Activated CD4-positive, alpha-beta T cell treated with anti-CD3 and anti-CD28 coated beads for 36 hours (primary cell): ENCODE measurements at regions of chr11 and their contacts with region 1.

Region 1: DNA sequence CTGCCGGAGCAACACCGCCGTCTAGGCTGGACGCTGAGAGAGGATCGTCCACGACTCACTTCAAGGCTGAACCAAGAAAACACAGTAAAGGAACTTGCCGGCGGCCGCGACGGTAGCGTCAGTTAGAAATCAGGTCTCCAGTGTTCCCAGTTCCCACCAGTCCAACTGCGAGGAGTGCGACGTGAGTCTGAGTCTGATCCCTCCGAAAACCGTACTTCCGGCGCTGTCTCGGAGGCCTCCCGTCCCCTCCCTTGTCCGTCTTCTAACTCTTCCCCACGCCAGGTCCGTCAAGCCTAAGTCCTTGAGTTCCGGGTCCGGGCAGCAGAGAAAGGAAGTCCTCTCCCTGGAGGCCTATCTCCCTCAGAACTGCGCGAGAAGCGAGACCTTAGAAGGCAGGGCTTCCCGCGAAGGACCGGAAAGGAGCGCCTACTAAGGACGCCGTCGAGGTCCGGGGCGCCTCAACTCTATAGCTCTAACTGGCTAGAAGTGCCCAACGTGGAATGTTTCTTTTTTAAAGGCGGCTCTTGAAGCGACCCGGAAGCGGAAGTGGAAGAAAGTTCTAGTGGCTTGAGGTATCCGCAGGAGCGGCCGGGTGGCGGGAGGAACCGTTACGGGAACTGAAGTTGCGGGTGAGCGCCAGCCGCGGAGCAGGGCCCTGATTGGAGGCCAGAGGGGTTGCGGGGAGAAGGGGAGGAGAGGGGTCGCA is at the starts of genes BANF1 and EIF1AD:
- DNase-seq: peak; percentile 95
- ATAC-seq: peak; percentile 88
- H3K4me3 Mint-ChIP-seq: peak within 1 kb of the TSS; percentile 100
- H3K27ac Mint-ChIP-seq: peak within 1 kb of the TSS; percentile 98
- H3K4me1 Mint-ChIP-seq: peaks cover 36% of the 10 kb centered on the region
- H3K27me3 Mint-ChIP-seq: no peaks in the 10 kb centered on the region
- total RNA-seq, gene BANF1: 233 to 293 TPM
- total RNA-seq, gene EIF1AD: 45.1 to 52.2 TPM

Region 2: DNA sequence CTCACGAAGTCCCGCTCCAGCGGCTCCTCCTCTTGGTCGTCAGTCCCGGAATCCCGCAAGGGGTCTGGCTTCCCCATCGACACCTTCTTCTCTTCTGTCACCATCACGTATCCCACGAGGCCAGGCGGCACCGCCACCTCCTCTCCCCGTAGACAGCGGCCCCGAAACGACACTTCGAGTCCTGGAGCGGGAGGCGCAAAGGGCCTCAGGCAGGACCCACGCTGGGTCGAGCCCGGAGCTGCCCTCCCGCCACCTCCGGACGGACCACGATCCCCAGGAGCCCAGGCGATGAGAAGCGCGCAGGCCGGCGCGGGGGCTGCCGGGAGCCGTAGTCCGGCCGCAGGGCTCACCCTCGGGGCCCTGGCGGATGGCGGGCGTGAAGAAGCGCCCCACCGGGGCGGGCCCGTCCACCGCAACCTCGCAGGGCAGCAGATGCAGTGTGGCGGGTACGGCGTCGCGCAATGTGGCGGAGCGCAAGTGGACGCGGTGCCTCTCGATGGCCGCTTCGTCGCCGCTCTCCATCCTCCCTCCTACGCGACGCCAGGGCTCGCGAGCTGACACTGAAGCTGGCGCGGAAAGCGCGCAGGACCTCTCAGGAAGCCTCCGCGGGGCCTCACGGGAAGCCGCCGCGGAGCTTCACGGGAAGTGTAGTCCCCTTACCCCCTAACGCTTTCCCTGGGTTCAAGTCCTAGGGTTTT is 281.7 kb before region 1 on chr11 and contains the start of gene RNASEH2C:
- CTCF ChIA-PET with region 1: interaction called, 3 read pairs
- POLR2A ChIA-PET with region 1: no interaction called
- intact Hi-C with region 1: loop called in 1 of 2 experiments (anchors 1 kb)
- DNase-seq: peak; percentile 92
- ATAC-seq: peak; percentile 94
- H3K4me3 Mint-ChIP-seq: peak within 1 kb of the TSS; percentile 84
- H3K27ac Mint-ChIP-seq: peak within 1 kb of the TSS; percentile 88
- H3K4me1 Mint-ChIP-seq: peaks cover 23% of the 10 kb centered on the region
- H3K27me3 Mint-ChIP-seq: no peaks in the 10 kb centered on the region
- total RNA-seq, gene RNASEH2C: 72.5 to 96.8 TPM

Region 3: GRCh38 chr11:65888163-65888814 is 113.8 kb before region 1 on chr11 and contains the start of gene FIBP:
- CTCF ChIA-PET with region 1: interaction called, 7 read pairs
- POLR2A ChIA-PET with region 1: interaction called, 4 read pairs
- intact Hi-C with region 1: loop called in 1 of 2 experiments (anchors 1 kb)
- DNase-seq: peak; percentile 99
- ATAC-seq: peak; percentile 68
- H3K4me3 Mint-ChIP-seq: peak within 1 kb of the TSS; percentile 94
- H3K27ac Mint-ChIP-seq: peak within 1 kb of the TSS; percentile 95
- H3K4me1 Mint-ChIP-seq: peaks cover 57% of the 10 kb centered on the region
- H3K27me3 Mint-ChIP-seq: no peaks in the 10 kb centered on the region
- total RNA-seq, gene FIBP: 95.4 to 121 TPM

Region 4: GRCh38 chr11:66022401-66023185 is 20.5 kb after region 1 on chr11:
- CTCF ChIA-PET with region 1: interaction called, 9 read pairs
- POLR2A ChIA-PET with region 1: interaction called, 3 read pairs
- intact Hi-C with region 1: loop called in 1 of 2 experiments (anchors 2 kb)
- DNase-seq: peak; percentile 89
- ATAC-seq: peak; percentile 94
- H3K4me3 Mint-ChIP-seq: no peak overlapping the region
- H3K27ac Mint-ChIP-seq: no peak overlapping the region
- H3K4me1 Mint-ChIP-seq: peaks cover 8% of the 10 kb centered on the region
- H3K27me3 Mint-ChIP-seq: peaks cover 7% of the 10 kb centered on the region

Region 5: DNA sequence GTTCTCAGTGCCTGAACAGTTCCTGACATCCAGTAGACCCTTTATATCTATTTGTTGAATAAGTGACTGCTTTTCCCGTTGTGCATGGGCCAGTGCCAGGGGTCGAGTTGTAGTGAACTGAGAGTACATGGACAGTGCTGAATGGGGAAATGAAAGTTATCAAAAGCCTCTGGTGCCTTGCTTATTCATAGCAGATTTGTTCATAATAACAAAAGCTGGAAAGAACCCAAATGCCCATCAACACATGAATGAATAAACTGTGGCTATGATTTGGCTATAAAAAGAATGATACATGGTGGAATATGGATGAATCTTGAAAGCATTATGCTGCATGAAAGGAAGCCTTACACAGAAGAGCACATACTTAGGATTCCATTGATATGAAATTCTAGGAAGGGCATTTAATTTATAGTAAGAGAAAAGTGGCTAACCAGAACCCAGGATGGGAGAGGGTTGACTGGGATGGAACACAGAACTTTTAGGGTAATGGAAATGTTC is 110.6 kb after region 1 on chr11:
- CTCF ChIA-PET with region 1: no interaction called
- POLR2A ChIA-PET with region 1: no interaction called
- intact Hi-C with region 1: no loop called
- DNase-seq: no peak
- ATAC-seq: no peak
- H3K4me3 Mint-ChIP-seq: no peak overlapping the region
- H3K27ac Mint-ChIP-seq: peak overlapping the region; percentile 91
- H3K4me1 Mint-ChIP-seq: peaks cover 96% of the 10 kb centered on the region
- H3K27me3 Mint-ChIP-seq: no peaks in the 10 kb centered on the region

Region 6: DNA sequence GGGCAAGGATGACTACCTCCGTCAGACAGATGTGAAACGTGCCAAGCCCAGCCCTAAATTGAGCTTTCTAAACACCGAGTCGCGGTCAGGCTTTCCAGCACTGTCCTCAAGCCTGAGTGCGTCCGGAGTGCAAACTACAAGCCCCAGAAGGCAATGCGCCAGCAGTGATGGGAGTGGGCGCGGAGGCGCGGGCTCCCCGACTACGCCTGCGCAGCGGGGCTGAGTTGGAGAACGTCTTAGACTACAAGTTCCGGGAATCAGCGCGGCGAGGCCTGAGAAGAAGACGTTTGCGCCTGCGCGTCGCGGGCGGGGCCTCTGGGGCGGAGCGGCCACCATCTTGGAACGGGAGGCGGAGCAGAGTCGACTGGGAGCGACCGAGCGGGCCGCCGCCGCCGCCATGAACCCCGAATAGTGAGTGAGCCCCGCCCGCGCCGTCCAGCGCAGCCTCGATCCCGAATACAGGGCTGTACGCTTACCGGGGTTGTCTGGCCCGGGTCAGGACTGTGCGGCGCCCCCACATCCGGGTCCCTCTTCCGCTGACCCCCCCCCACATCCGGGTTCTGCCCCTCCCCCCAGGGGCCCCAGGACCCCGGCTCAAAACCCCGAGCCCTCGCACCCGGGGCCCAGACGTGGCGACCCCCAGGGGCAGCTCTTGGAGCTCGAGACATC is 266.3 kb after region 1 on chr11 and contains the start of gene RAB1B:
- CTCF ChIA-PET with region 1: no interaction called
- POLR2A ChIA-PET with region 1: no interaction called
- intact Hi-C with region 1: loop called in 1 of 2 experiments (anchors 1 kb)
- DNase-seq: peak; percentile 100
- ATAC-seq: peak; percentile 88
- H3K4me3 Mint-ChIP-seq: peak within 1 kb of the TSS; percentile 100
- H3K27ac Mint-ChIP-seq: peak within 1 kb of the TSS; percentile 97
- H3K4me1 Mint-ChIP-seq: peaks cover 28% of the 10 kb centered on the region
- H3K27me3 Mint-ChIP-seq: no peaks in the 10 kb centered on the region
- total RNA-seq, gene RAB1B: 114 to 147 TPM

Region 7: DNA sequence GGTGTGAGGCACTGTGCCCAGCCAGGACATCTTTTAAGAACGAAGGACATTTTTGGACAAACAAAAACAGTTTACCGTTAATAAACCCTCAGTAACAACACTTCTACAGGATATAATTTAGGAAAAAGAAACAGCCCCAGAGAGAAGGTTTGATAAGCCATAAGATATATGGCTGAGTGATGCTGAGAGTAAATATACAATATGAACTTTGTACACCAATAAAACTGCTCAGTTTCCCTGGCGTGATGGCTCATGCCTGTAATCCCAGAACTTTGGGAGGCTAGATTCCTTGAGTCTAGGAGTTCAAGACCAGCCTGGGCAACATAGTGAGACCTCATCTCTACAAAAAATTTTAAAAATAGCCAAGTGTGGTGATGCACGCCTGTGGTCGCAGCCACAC is 496.4 kb after region 1 on chr11:
- CTCF ChIA-PET with region 1: no interaction called
- POLR2A ChIA-PET with region 1: no interaction called
- intact Hi-C with region 1: no loop called
- DNase-seq: no peak
- ATAC-seq: no peak
- H3K4me3 Mint-ChIP-seq: no peak overlapping the region
- H3K27ac Mint-ChIP-seq: no peak overlapping the region
- H3K4me1 Mint-ChIP-seq: no peaks in the 10 kb centered on the region
- H3K27me3 Mint-ChIP-seq: no peaks in the 10 kb centered on the region